ENCODE measurements at regions of chr12 and their contacts with region 1.

Region 1: GRCh38 chr12:22562036-22563028 is 18.0 kb upstream of the C2CD5 start:
- DNase-seq: no peak
- ATAC-seq: no peak
- H3K4me3 ChIP-seq: no peak overlapping the region
- H3K27ac ChIP-seq: no peak overlapping the region
- H3K4me1 ChIP-seq: no peaks in the 10 kb centered on the region
- H3K27me3 ChIP-seq: no peaks in the 10 kb centered on the region
- CTCF ChIP-seq: no peak
- POLR2A ChIP-seq: no peak

Region 2: GRCh38 chr12:22500100-22500499 is 62.2 kb before region 1 on chr12:
- intact Hi-C with region 1: loop called in 1 of 10 experiments (anchors 10 kb)
- DNase-seq: no peak
- ATAC-seq: no peak
- H3K4me3 ChIP-seq: no peak overlapping the region
- H3K27ac ChIP-seq: no peak overlapping the region
- H3K4me1 ChIP-seq: no peaks in the 10 kb centered on the region
- H3K27me3 ChIP-seq: no peaks in the 10 kb centered on the region
- CTCF ChIP-seq: no peak
- POLR2A ChIP-seq: no peak

Region 3: DNA sequence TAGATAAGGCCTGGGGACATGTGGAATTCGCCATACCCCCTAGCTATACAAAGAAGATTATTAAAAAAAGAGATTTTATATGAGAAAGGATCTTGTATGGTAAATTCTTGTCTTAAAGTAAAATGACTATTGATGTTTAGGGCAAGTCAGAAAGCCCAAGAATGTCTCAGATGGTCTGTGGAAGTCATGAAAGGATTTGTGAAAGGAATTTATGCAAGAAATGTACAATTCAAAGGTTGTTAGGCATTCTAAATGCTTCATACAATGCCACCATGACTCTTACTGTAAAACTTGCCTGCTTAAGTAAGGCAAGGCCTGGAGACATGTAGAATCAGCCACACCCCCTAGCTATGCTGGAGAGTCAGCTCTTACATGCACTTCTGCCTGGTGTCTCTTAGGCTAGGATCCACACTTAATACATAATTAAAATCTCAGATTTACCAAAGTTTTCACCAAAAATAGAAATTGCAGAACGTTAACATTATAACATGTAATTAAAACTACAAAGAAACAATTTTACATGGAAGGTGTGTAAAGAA is 53.7 kb after region 1 on chr12:
- intact Hi-C with region 1: loop called in 1 of 10 experiments (anchors 5 kb)
- DNase-seq: no peak
- ATAC-seq: no peak
- H3K4me3 ChIP-seq: no peak overlapping the region
- H3K27ac ChIP-seq: no peak overlapping the region
- H3K4me1 ChIP-seq: no peaks in the 10 kb centered on the region
- H3K27me3 ChIP-seq: no peaks in the 10 kb centered on the region
- CTCF ChIP-seq: no peak
- POLR2A ChIP-seq: no peak

Region 4: DNA sequence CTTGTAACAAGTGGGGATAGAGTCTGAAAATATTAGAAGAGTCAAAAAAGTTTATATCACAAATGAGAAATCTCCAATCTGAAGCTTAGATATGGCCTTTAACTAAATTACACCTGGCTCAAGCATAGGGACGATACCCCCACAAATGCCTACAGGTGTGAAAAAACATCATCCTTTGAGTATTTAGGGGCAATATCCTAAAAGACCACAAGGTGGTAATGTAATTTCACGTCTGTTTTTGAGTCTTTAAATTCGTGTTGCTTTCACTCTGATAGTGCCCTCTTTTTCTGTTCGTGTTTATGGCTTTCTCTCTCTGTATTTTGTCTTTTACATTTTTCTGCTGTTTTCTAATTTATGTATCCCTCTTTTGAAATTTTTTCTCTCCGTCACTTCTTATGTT is 147.0 kb after region 1 on chr12:
- intact Hi-C with region 1: no loop called
- DNase-seq: no peak
- ATAC-seq: no peak
- H3K4me3 ChIP-seq: no peak overlapping the region
- H3K27ac ChIP-seq: no peak overlapping the region
- H3K4me1 ChIP-seq: no peaks in the 10 kb centered on the region
- H3K27me3 ChIP-seq: no peaks in the 10 kb centered on the region
- CTCF ChIP-seq: peak in 11 of 12 donors; percentile 15 to 53 (median 37)
- POLR2A ChIP-seq: no peak